Activated CD4-positive, alpha-beta memory T cell treated with anti-CD3 and anti-CD28 coated beads for 36 hours (primary cell): ENCODE measurements at regions of chr3 and their contacts with region 1.

Region 1: DNA sequence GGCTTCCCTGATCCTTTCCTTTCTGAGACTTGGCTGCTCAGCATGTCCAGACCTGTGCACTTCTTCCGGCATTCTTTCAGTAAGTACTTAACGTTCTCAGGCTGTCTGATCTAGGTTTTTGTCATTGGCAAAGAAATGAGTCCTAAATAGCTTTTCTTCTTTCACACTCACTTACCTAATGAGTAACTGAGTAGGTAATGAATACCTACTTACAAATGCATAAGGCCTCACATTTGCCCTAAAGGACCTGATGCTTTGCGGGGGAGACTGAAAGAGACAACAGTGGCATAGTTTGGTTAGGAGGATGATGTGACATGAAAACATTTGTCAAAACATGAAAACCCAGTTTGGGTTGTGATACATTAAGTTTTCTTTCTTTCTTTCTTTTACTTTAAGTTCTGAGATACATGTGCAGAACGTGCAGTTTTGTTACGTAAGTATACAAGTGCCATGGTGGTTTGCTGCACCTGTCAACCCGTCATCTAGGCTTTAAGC is 516.7 kb upstream of the CFAP20DC start:
- DNase-seq: peak; percentile 66
- H3K4me3 Mint-ChIP-seq: no peak overlapping the region
- H3K27ac Mint-ChIP-seq: peak overlapping the region; percentile 18
- H3K4me1 Mint-ChIP-seq: peaks cover 17% of the 10 kb centered on the region
- H3K27me3 Mint-ChIP-seq: peaks cover 9% of the 10 kb centered on the region

Region 2: DNA sequence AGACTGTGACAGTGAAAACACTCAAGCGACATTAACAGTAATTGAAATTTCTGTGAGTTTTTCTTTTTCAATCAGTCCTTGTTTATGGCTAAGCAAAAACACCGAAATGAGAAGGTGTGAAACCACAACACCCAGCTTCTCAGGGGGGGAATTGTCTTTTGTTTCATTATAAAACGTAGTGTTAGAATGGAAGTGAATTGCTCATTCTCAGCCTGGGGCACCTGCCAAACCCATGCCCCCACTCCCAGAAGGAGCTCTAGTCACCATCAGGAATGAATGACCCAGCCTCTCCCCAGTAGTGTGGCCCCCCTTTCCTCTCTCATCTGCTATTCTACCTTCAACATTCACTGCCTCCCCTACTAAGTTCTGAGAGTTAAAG is 330.9 kb before region 1 on chr3:
- CTCF ChIA-PET with region 1: no interaction called
- POLR2A ChIA-PET with region 1: no interaction called
- intact Hi-C with region 1: loop called (anchors 2 kb)
- DNase-seq: peak; percentile 71
- H3K4me3 Mint-ChIP-seq: no peak overlapping the region
- H3K27ac Mint-ChIP-seq: no peak overlapping the region
- H3K4me1 Mint-ChIP-seq: peaks cover 19% of the 10 kb centered on the region
- H3K27me3 Mint-ChIP-seq: peaks cover 15% of the 10 kb centered on the region

Region 3: GRCh38 chr3:59450946-59451763 is 115.4 kb before region 1 on chr3:
- CTCF ChIA-PET with region 1: no interaction called
- POLR2A ChIA-PET with region 1: interaction called, 5 read pairs
- intact Hi-C with region 1: loop called (anchors 1 kb)
- DNase-seq: peak; percentile 73
- H3K4me3 Mint-ChIP-seq: peak overlapping the region; percentile 53
- H3K27ac Mint-ChIP-seq: peak overlapping the region; percentile 94
- H3K4me1 Mint-ChIP-seq: peaks cover 64% of the 10 kb centered on the region
- H3K27me3 Mint-ChIP-seq: no peaks in the 10 kb centered on the region

Region 4: GRCh38 chr3:59469948-59470723 is 96.4 kb before region 1 on chr3:
- CTCF ChIA-PET with region 1: no interaction called
- POLR2A ChIA-PET with region 1: no interaction called
- intact Hi-C with region 1: loop called (anchors 1 kb)
- DNase-seq: peak; percentile 70
- H3K4me3 Mint-ChIP-seq: no peak overlapping the region
- H3K27ac Mint-ChIP-seq: peak overlapping the region; percentile 71
- H3K4me1 Mint-ChIP-seq: peaks cover 22% of the 10 kb centered on the region
- H3K27me3 Mint-ChIP-seq: no peaks in the 10 kb centered on the region

Region 5: GRCh38 chr3:59526999-59527398 is 39.5 kb before region 1 on chr3:
- CTCF ChIA-PET with region 1: no interaction called
- POLR2A ChIA-PET with region 1: interaction called, 4 read pairs
- intact Hi-C with region 1: loop called (anchors 1 kb)
- DNase-seq: no peak
- H3K4me3 Mint-ChIP-seq: no peak overlapping the region
- H3K27ac Mint-ChIP-seq: peak overlapping the region; percentile 0
- H3K4me1 Mint-ChIP-seq: peaks cover 15% of the 10 kb centered on the region
- H3K27me3 Mint-ChIP-seq: peaks cover 2% of the 10 kb centered on the region

Region 6: DNA sequence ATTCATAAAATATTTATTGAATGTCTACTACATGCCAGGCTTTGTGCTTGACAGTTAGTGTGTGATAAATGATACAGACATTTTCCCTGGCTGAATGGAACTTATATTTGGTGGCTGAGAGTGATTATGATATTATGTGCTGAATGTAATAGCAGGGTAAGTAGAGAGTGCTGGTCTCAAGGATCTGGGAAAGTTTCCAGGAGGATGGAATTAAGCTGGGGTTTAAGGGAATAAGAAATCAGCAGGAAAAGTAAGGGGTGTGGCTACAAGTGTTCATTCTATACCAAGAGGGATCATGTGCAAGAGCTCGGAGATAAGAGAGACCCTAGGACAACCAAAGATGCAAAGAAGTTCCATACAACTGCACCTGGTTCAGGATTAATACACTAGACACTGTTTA is 16.6 kb before region 1 on chr3:
- CTCF ChIA-PET with region 1: no interaction called
- POLR2A ChIA-PET with region 1: no interaction called
- intact Hi-C with region 1: no loop called
- DNase-seq: no peak
- H3K4me3 Mint-ChIP-seq: no peak overlapping the region
- H3K27ac Mint-ChIP-seq: no peak overlapping the region
- H3K4me1 Mint-ChIP-seq: peaks cover under 1% of the 10 kb centered on the region
- H3K27me3 Mint-ChIP-seq: peaks cover under 1% of the 10 kb centered on the region

Region 7: DNA sequence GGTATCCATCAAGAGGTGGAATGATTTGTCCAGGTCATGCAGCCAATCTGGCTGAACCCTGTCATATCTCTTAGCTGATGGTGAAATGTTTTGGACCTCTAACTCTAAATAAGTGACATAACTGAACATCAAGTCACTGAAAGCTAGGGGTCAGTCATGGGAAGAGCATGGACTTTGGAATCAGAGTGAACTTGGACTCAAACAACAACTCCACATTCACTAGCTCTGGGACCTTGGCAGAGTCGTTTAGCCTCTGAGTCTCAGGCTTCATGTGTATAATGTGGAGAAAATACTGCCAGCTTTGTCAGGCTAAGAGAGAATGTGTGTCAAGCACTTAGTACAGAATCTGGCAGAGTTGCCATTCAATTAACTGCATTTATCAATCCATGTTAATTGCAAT is 41.1 kb after region 1 on chr3:
- CTCF ChIA-PET with region 1: no interaction called
- POLR2A ChIA-PET with region 1: no interaction called
- intact Hi-C with region 1: no loop called
- DNase-seq: no peak
- H3K4me3 Mint-ChIP-seq: no peak overlapping the region
- H3K27ac Mint-ChIP-seq: no peak overlapping the region
- H3K4me1 Mint-ChIP-seq: no peaks in the 10 kb centered on the region
- H3K27me3 Mint-ChIP-seq: no peaks in the 10 kb centered on the region

Region 8: DNA sequence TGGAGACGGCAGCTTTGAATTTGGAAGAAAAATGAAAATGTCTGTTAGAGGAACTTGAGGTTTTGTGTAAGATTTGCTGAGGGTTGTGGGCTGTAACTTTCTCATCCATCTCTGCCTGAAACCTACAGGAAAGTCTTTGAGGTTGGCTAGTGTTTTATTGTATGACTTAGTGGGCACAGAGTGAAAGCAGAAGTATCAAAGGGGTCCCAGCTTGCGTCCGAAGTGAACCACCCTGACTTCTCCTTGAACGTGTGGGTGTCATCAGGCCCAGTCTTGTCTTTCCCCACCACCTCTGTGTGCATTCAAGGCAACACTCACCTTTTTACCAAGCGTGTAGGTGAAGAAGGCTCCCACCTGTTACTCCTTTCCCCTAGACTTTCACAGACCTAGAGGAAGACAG is 165.4 kb after region 1 on chr3:
- CTCF ChIA-PET with region 1: no interaction called
- POLR2A ChIA-PET with region 1: no interaction called
- intact Hi-C with region 1: no loop called
- DNase-seq: no peak
- H3K4me3 Mint-ChIP-seq: no peak overlapping the region
- H3K27ac Mint-ChIP-seq: no peak overlapping the region
- H3K4me1 Mint-ChIP-seq: no peaks in the 10 kb centered on the region
- H3K27me3 Mint-ChIP-seq: no peaks in the 10 kb centered on the region

Region 9: DNA sequence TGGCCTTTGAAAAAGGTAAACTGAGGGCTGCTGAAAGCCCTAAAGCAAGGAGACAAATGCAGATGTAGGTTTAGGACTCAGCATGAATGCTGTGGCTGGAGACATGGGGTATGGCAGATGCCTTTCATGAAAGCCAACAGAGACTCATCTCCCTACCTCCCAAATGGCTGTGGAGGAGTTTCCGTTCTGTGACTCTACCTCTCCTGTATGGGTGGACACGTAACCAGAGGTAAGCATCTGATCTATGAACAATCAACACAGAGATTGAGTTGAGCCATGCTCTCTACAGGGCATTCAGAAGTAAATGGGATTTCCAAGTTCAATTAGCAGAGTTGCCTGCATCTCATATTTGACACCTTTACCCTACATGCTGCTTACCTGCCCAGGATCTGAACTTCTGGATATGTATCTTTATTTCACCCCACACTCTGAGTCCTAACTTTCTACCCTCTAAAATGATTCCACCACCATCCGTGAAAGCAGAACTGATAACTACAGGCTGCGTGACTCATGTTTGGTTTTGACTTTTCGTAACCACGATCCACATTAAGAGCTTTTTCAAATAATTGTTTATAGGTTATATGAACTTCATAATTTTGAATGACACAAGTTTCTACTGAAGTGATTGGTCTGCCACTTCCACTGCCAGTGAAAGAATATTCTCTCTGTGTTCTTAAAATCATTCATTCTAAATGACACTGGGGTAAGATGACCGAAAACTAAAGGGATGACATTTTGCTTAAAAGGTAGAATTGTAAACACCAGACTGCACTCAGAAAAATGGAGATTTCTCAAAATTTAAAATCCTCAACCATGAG is 626.0 kb after region 1 on chr3:
- CTCF ChIA-PET with region 1: no interaction called
- POLR2A ChIA-PET with region 1: no interaction called
- intact Hi-C with region 1: loop called (anchors 5 kb)
- DNase-seq: peak; percentile 48
- H3K4me3 Mint-ChIP-seq: no peak overlapping the region
- H3K27ac Mint-ChIP-seq: peak overlapping the region; percentile 64
- H3K4me1 Mint-ChIP-seq: peaks cover 29% of the 10 kb centered on the region
- H3K27me3 Mint-ChIP-seq: peaks cover 3% of the 10 kb centered on the region